ENCODE measurements at regions of chr11 and their contacts with region 1.

Region 1: GRCh38 chr11:83292709-83293456 is 6.7 kb upstream of the CCDC90B start:
- DNase-seq: peak; percentile 41
- H3K4me3 ChIP-seq: no peak overlapping the region
- H3K27ac ChIP-seq: no peak overlapping the region
- H3K4me1 ChIP-seq: no peaks in the 10 kb centered on the region
- H3K27me3 ChIP-seq: no peaks in the 10 kb centered on the region
- CTCF ChIP-seq: peak; percentile 35 to 71 (median 60)
- POLR2A ChIP-seq: no peak

Region 2: DNA sequence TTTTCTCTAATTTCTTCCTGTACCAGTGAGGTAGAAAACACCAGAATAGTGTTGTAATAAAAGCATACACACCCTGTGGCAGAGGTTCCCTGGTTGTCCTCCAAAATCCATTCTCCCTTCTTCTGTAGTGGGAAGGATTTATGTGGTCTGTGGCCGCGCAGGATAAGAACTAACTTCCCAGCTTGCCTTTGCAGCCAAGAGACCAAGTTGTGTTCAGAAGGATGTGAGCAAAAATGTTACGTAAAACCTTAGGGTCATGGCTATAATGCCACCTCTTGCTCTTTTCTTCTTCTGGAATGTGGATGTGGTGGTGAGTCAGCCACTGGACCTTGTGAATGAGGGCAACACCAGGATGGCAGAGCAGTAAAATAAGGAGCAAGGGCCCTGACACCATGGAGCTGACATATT is 35.1 kb before region 1 on chr11:
- intact Hi-C with region 1: no loop called
- DNase-seq: no peak
- H3K4me3 ChIP-seq: no peak overlapping the region
- H3K27ac ChIP-seq: no peak overlapping the region
- H3K4me1 ChIP-seq: no peaks in the 10 kb centered on the region
- H3K27me3 ChIP-seq: no peaks in the 10 kb centered on the region
- CTCF ChIP-seq: no peak
- POLR2A ChIP-seq: no peak

Region 3: DNA sequence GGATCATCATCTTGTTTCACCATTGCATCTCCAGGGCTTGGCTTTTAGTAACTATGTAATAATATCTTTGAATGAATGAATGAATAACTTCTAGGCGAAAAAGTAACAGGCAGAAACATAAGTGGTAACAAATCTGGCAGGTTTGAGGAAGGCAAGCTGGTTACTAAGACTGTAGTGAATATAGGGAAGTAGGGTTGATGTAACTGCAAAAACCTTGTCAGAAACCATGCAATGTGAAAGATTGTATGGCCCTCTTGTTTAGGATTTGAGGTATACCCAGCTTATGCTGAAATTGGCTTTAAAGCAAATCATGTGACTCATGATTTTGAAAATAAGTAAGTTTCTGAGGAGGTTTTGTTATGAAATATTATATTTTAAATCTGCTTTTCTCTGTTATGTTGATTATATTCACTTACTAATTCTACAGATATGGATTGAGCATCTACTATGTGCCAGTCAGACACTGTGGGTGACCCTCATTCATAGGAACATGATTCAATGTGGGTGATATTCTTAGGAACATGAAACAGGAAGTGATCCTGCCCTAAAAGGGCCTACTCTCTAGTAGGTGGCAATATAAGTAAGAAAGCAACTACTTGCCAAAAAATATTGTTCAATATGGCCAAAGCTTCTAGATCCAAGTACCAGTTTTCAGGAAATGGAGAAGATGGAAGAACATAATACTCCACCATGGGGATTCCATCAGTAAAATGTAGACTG is 108.8 kb after region 1 on chr11:
- intact Hi-C with region 1: no loop called
- DNase-seq: no peak
- H3K4me3 ChIP-seq: no peak overlapping the region
- H3K27ac ChIP-seq: no peak overlapping the region
- H3K4me1 ChIP-seq: no peaks in the 10 kb centered on the region
- H3K27me3 ChIP-seq: no peaks in the 10 kb centered on the region
- CTCF ChIP-seq: no peak
- POLR2A ChIP-seq: no peak

Region 4: DNA sequence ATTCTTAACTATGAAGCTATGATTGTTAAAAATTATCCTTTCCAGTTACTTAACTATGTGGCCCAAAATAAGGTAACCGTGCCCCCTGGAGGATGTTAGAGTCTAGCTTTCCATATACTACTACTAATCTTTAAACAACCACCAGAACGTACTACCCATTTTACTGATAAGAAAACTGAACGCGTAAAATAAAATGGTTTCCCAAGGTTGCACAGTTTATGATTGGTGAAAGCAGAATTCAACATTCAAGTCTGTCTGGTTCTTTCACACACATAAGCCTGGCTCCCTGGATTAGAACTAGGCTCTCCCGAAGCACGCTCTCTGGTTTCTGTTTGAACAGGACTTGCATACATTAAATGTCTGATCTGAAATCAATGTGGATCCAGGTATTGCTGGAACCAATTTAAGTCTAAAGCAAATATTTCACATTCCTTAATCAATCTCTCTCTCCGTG is 431.2 kb after region 1 on chr11:
- intact Hi-C with region 1: loop called (anchors 2 kb)
- DNase-seq: peak; percentile 55
- H3K4me3 ChIP-seq: peak overlapping the region; percentile 27 to 35
- H3K27ac ChIP-seq: peak overlapping the region; percentile 68 to 74
- H3K4me1 ChIP-seq: peaks cover 3% of the 10 kb centered on the region
- H3K27me3 ChIP-seq: no peaks in the 10 kb centered on the region
- CTCF ChIP-seq: peak in 3 of 4 experiments; percentile 26 to 63 (median 57)
- POLR2A ChIP-seq: no peak

Region 5: GRCh38 chr11:83819933-83820549 is 527.2 kb after region 1 on chr11:
- intact Hi-C with region 1: loop called (anchors 5 kb)
- DNase-seq: peak; percentile 57
- H3K4me3 ChIP-seq: no peak overlapping the region
- H3K27ac ChIP-seq: no peak overlapping the region
- H3K4me1 ChIP-seq: no peaks in the 10 kb centered on the region
- H3K27me3 ChIP-seq: no peaks in the 10 kb centered on the region
- CTCF ChIP-seq: peak in 3 of 4 experiments; percentile 46 to 83 (median 82)
- POLR2A ChIP-seq: no peak

Measured in prostate gland (tissue), 2 donors.